CD8-positive, alpha-beta T cell (primary cell): ENCODE measurements at regions of chr22 and their contacts with region 1.

Region 1: DNA sequence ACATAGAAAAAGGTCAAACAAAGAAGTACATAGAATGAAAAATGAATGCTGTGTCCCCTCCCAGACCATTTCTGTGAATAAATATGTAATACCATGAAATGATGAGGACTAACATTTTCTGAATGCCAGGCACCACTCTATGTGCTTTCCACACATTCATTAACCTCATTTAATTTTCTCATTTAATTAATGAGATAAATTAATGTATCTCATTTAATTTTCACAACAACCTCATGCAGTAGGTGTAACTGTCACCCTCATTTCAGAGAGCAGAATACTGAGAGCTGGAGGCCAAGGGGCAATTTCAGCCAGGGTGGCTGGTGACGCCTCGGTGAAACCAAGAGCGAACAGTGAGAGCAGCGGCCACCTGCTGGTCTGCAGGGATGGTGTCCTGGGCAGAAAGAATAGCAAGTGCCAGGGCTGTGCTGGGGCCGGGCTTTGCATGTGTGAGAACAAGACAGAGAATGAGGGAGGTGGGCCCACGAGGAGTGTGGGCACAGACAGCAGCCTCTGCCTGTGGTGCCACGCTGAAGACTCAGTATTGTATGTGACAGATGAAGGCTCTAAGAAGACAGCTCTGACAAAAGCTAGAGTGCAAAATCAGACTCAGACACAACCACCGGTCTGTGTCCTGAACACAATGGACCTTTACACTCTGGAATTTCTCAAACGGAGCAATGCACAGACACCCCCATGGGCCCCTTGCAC is 1.8 kb upstream of the SERPIND1 start:
- DNase-seq: no peak
- ATAC-seq: no peak
- H3K4me3 ChIP-seq: no peak overlapping the region
- H3K4me3 Mint-ChIP-seq: no peak overlapping the region
- H3K27ac ChIP-seq: no peak overlapping the region
- H3K27ac Mint-ChIP-seq: no peak overlapping the region
- H3K4me1 ChIP-seq: no peaks in the 10 kb centered on the region
- H3K4me1 Mint-ChIP-seq: peaks cover 1% of the 10 kb centered on the region
- H3K27me3 ChIP-seq: no peaks in the 10 kb centered on the region
- H3K27me3 Mint-ChIP-seq: no peaks in the 10 kb centered on the region
- CTCF ChIP-seq: no peak

Region 2: GRCh38 chr22:20783844-20784723 is 12.0 kb after region 1 on chr22:
- CTCF ChIA-PET with region 1: interaction called, 19 read pairs
- POLR2A ChIA-PET with region 1: no interaction called
- intact Hi-C with region 1: no loop called
- DNase-seq: peak; percentile 8 to 67 (median 44)
- ATAC-seq: peak; percentile 80
- H3K4me3 ChIP-seq: no peak overlapping the region
- H3K4me3 Mint-ChIP-seq: no peak overlapping the region
- H3K27ac ChIP-seq: no peak overlapping the region
- H3K27ac Mint-ChIP-seq: no peak overlapping the region
- H3K4me1 ChIP-seq: no peaks in the 10 kb centered on the region
- H3K4me1 Mint-ChIP-seq: peaks cover 4% of the 10 kb centered on the region
- H3K27me3 ChIP-seq: no peaks in the 10 kb centered on the region
- H3K27me3 Mint-ChIP-seq: no peaks in the 10 kb centered on the region
- CTCF ChIP-seq: peak; percentile 81

Region 3: GRCh38 chr22:21041937-21042580 is 270.0 kb after region 1 on chr22:
- CTCF ChIA-PET with region 1: no interaction called
- POLR2A ChIA-PET with region 1: no interaction called
- intact Hi-C with region 1: no loop called
- DNase-seq: no peak
- ATAC-seq: no peak
- H3K4me3 ChIP-seq: no peak overlapping the region
- H3K4me3 Mint-ChIP-seq: no peak overlapping the region
- H3K27ac ChIP-seq: no peak overlapping the region
- H3K27ac Mint-ChIP-seq: no peak overlapping the region
- H3K4me1 ChIP-seq: peaks cover 23% of the 10 kb centered on the region
- H3K4me1 Mint-ChIP-seq: peaks cover 22% of the 10 kb centered on the region
- H3K27me3 ChIP-seq: peaks cover 0 to 5% of the 10 kb centered on the region in 2 experiments
- H3K27me3 Mint-ChIP-seq: peaks cover 27% of the 10 kb centered on the region
- CTCF ChIP-seq: no peak